HepG2 (cell line): ENCODE measurements at regions of chr11 and their contacts with region 1.

Region 1: DNA sequence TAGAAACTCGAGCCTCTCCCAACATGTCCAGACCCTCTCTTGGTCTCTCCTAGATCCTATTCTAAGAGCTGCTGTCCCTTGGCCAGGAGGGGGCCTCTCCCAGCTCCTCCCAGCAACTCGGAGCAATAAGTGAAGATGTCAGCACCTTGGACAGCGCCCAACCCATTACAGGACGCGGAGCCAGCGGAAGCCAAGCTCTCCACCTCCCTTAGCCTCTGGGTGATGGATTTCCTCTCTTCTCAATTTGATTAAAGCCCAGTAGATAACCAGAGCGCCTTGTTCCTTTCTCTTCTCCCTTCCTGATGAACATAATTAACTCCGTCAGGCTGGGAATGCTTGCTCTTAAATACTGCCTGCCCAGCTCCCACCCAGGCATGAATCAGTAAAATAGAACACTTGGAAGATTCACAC is 26.2 kb upstream of the TPBGL start:
- DNase-seq: peak; percentile 82
- ATAC-seq: peak; percentile 98
- H3K4me3 ChIP-seq: no peak overlapping the region
- H3K27ac ChIP-seq: no peak overlapping the region
- H3K4me1 ChIP-seq: no peaks in the 10 kb centered on the region
- H3K27me3 ChIP-seq: 0 out of 5 replicates have a peak, but pooled peaks cover 0 to 3% of the 10 kb centered on the region in 2 experiments
- CTCF ChIP-seq: peak; percentile 53
- EP300 ChIP-seq: no peak
- POLR2A ChIP-seq: no peak
- RAD21 ChIP-seq: peak; percentile 51

Region 2: DNA sequence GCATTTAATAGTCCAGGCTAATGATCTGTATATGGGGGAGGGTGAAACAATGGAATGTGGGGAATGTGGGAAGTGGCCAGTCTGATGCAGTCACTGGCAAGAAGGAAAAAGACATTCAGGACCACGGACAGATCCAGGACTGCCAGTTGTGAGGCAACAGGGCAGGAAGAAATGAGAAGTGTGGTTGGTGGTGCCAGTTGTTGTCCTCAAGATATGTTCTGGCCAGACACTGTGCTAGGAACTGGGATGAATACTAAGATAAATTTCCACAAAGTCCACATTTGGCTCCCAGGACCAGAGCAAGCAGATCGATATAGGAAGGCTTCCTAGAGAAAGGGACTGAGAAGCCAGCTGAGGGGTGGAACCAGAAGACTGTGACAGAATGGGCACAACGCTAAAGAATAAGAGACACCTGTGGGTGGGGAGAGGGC is 19.3 kb after region 1 on chr11:
- CTCF ChIA-PET with region 1: interaction called, 3 read pairs
- POLR2A ChIA-PET with region 1: no interaction called
- in situ Hi-C with region 1: no loop called
- intact Hi-C with region 1: loop called (anchors 1 kb)
- DNase-seq: peak; percentile 55
- ATAC-seq: peak; percentile 48; the same call in 2 of the 3 replicates
- H3K4me3 ChIP-seq: no peak overlapping the region
- H3K27ac ChIP-seq: no peak overlapping the region
- H3K4me1 ChIP-seq: no peaks in the 10 kb centered on the region
- H3K27me3 ChIP-seq: peaks cover 2 to 10% of the 10 kb centered on the region in 2 experiments; a peak in 4 of 5 replicates
- CTCF ChIP-seq: no peak
- EP300 ChIP-seq: no peak
- POLR2A ChIP-seq: no peak
- RAD21 ChIP-seq: no peak

Region 3: DNA sequence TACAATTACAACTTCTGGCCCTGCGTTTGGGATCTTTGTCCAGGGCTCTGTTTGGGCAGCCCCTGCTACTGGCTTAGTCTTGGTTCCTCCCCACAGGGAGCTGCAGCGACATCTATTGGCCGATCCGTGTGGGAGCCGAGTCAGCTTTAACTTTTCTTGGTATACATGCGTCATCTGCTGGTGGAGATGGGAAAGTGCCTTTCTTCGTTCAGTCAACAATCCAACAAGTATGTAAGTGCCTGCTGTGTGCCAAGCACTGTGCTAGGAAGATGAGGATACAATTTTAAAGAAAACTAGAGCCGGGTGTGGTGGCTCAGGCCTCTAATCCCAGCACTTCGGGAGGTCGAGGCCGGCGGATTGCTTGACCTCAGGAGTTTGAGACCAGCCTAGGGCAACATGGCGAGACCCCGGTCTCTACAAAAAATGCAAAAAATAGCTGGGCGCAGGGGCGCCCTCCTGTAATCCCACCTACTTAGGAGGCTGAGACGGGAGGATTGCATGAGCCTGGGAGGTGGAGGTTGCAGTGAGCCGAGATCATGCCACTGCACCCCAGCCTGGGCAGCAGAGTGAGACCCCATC is 34.4 kb after region 1 on chr11:
- CTCF ChIA-PET with region 1: interaction called, 6 read pairs
- POLR2A ChIA-PET with region 1: no interaction called
- in situ Hi-C with region 1: loop called (anchors 5 kb)
- intact Hi-C with region 1: no loop called
- DNase-seq: peak; percentile 81
- ATAC-seq: peak; percentile 85
- H3K4me3 ChIP-seq: no peak overlapping the region; a peak in 1 of 6 replicates
- H3K27ac ChIP-seq: no peak overlapping the region
- H3K4me1 ChIP-seq: peaks cover 5% of the 10 kb centered on the region; the same call in 1 of the 2 replicates
- H3K27me3 ChIP-seq: peaks cover 2 to 26% of the 10 kb centered on the region in 2 experiments; a peak in 4 of 5 replicates
- CTCF ChIP-seq: peak; percentile 99
- EP300 ChIP-seq: no peak
- POLR2A ChIP-seq: no peak
- RAD21 ChIP-seq: peak; percentile 95